T-cell (primary cell): ENCODE measurements at regions of chr3 and their contacts with region 1.

Region 1: DNA sequence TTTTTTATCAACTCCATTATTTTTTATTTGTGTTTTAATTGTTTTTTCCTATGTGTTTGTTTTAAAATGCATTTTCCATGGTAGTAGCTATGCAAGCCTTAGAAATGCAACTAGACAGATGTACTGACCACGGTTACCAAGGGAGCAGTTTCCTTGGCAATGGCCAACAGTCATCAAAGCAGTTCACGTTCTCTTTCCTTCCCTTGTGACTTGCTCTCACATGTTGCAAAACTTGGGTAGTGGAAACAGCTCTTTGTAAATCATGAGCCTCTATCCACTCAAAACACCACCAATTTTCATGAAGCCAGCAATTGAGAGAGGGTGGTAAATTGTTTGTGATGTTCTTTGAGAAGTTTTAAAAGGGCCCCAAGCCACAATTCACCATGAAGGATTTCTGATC is 499.4 kb upstream of the MDFIC2 start:
- DNase-seq: no peak
- ATAC-seq: no peak
- H3K4me3 ChIP-seq: no peak overlapping the region
- H3K4me3 Mint-ChIP-seq: no peak overlapping the region
- H3K27ac ChIP-seq: no peak overlapping the region
- H3K27ac Mint-ChIP-seq: no peak overlapping the region
- H3K4me1 ChIP-seq: no peaks in the 10 kb centered on the region
- H3K4me1 Mint-ChIP-seq: no peaks in the 10 kb centered on the region
- H3K27me3 ChIP-seq: no peaks in the 10 kb centered on the region
- H3K27me3 Mint-ChIP-seq: peaks cover 6 to 11% of the 10 kb centered on the region in 2 donors

Region 2: DNA sequence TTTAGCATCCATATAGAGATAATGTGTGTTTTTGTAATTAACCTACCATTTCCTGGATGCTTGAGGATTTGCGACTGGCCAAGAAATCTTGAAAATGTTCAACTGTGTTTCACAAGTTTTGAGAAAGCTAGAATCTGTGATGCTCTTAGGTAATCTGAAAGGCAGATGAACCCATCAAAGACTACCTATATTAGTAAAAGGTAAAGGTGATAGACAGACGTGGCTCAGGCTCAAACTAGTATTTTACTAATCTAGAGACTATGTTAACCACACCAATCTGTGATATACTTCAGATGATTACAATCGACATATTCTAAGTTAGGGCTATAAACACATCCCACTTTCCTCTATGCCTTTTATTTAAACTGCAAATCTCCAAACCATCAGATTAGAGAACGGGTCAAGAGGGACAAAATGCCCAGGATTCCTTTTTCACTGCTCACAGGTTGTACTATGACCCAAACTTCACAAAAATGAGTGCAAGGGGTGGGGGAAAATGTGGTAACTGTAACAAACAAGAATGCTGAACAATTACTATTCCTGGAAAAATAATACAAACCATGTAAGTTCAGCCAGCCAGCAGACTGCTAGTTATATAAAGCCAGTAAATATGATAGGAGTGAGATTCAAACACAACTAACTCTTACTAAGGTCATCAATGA is 476.5 kb after region 1 on chr3:
- CTCF ChIA-PET with region 1: interaction called in 1 of 2 experiments, 12 read pairs
- POLR2A ChIA-PET with region 1: no interaction called
- DNase-seq: no peak
- ATAC-seq: no peak
- H3K4me3 ChIP-seq: no peak overlapping the region
- H3K4me3 Mint-ChIP-seq: no peak overlapping the region
- H3K27ac ChIP-seq: no peak overlapping the region
- H3K27ac Mint-ChIP-seq: peak overlapping the region; percentile 5 to 49
- H3K4me1 ChIP-seq: no peaks in the 10 kb centered on the region
- H3K4me1 Mint-ChIP-seq: peaks cover 62 to 72% (median 68%) of the 10 kb centered on the region in 3 donors
- H3K27me3 ChIP-seq: no peaks in the 10 kb centered on the region
- H3K27me3 Mint-ChIP-seq: no peaks in the 10 kb centered on the region